ENCODE measurements at regions of chr5 and their contacts with region 1.

Region 1: DNA sequence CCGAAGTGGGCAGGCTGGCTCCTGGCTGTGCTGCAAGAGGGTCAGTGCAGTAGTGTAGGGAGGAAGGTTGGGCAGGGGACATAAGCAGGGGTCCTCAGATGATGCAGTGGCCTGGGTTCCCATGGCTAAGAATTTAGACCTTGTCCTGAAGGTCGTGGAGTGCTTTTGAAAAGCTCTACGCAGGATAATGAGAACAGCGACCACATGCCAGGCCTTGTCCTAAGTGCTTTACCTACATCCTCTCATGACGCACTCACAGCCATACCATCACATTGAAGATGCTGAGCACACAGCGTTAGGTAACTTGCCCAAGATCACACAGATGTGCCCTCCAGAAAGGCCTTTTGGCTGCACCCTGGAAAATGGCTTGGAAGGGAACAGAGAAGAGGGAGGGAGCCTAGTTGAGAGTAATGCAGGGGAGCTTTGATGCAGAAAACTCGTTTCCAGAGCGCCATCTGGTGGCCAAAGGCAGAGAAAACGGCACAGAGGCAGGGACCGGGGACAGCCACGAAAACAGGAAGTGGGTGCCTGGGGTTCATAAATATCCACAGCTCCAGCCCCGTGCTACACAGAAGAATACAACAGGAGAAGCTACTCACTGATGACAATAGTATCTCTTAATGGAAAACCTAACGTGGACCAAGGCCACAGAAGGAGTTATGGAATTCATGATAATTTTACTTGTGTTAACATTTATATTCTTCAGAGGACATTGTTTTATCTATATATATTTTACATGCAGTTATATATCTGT is 2.6 kb upstream of the PCDH12 start:
- DNase-seq: peak; percentile 88
- H3K27ac ChIP-seq: no peak overlapping the region
- CTCF ChIP-seq: peak; percentile 94

Region 2: DNA sequence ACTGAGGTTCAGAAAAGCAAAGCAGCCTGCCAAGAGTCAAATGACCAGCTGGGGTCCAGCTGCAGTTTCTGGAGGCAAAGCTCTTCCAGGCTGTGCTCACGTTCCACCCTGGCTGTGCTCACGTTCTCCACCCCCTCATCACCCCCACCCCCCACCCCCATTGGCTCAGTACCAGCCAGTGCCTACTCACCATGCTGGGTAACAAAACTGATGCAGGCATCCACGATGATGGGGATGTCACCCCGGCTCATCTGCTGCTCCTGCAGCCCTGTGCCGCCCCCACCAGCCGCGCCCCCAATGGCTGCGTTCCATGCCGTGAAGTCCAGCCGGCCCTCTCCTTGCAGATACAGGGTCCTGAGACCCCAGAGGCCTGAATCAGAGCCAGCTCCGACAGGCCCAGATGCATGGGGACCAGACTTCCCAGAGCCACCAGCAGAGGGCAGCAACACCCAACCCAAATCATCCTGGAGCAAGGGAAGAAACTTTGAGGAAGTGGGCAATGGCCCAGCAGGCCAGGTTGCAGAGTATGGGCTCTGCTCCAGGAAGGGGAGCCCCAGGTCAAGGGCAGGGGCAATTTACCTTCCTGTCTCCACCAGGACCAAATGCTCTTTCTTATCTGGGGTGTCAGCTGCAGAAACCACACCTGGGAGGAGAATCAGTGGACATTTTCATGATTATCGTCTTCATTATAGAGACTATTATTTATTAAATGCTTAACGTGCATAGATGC is 295.7 kb before region 1 on chr5:
- CTCF ChIA-PET with region 1: interaction called, 14 read pairs
- POLR2A ChIA-PET with region 1: no interaction called
- DNase-seq: peak; percentile 73
- H3K27ac ChIP-seq: no peak overlapping the region
- CTCF ChIP-seq: peak; percentile 96

Region 3: DNA sequence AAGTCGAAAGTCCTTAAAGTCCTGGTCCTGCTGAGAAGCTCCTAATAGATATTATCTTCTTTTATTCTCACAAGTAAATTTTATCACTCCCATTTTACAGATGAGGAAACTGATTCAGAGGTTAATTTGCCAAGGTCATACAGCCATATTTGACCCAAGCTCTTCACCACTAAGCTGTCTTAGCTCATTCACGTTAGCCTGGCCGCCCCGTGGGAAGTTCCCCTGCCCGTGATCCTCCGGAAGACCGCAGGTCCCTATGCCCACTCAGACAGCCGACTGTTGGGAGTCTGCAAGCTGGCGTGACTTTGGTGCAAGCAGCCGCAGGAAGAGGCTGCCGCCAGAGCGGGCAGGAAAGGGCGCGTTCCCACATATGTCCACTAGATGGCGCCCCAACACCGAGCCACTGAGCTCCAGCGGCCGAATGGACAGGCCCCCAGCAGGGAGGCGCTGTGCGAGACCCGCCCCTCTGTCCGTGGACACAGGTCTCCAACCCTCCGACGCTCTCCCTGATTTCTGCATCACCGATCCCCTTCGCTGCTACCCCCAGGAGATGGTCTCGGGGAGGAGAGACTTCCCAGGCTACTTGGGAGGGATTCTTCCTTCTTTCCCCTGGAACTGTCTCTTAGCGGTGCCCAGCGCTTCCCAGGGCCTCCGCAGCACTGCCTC is 268.6 kb before region 1 on chr5:
- CTCF ChIA-PET with region 1: interaction called, 102 read pairs
- POLR2A ChIA-PET with region 1: no interaction called
- DNase-seq: peak; percentile 84
- H3K27ac ChIP-seq: no peak overlapping the region
- CTCF ChIP-seq: peak; percentile 99

Region 4: GRCh38 chr5:141821361-141821925 is 139.2 kb before region 1 on chr5:
- CTCF ChIA-PET with region 1: interaction called, 13 read pairs
- POLR2A ChIA-PET with region 1: no interaction called
- DNase-seq: peak; percentile 99
- H3K27ac ChIP-seq: peak overlapping the region; percentile 74
- CTCF ChIP-seq: no peak

Region 5: GRCh38 chr5:141910271-141910673 is 50.4 kb before region 1 on chr5:
- CTCF ChIA-PET with region 1: interaction called, 16 read pairs
- POLR2A ChIA-PET with region 1: no interaction called
- DNase-seq: no peak
- H3K27ac ChIP-seq: no peak overlapping the region
- CTCF ChIP-seq: no peak

Region 6: GRCh38 chr5:141940695-141941271 is 19.8 kb before region 1 on chr5:
- CTCF ChIA-PET with region 1: interaction called, 21 read pairs
- POLR2A ChIA-PET with region 1: no interaction called
- DNase-seq: no peak
- H3K27ac ChIP-seq: peak overlapping the region; percentile 51
- CTCF ChIP-seq: no peak

Region 7: GRCh38 chr5:142246258-142246657 is 285.6 kb after region 1 on chr5:
- CTCF ChIA-PET with region 1: no interaction called
- POLR2A ChIA-PET with region 1: no interaction called
- DNase-seq: peak; percentile 86
- H3K27ac ChIP-seq: peak overlapping the region; percentile 52
- CTCF ChIP-seq: no peak

Region 8: GRCh38 chr5:142432369-142432863 is 471.8 kb after region 1 on chr5:
- CTCF ChIA-PET with region 1: no interaction called
- POLR2A ChIA-PET with region 1: no interaction called
- DNase-seq: no peak
- H3K27ac ChIP-seq: no peak overlapping the region
- CTCF ChIP-seq: no peak

Measured in RWPE1 (cell line).